PC-9 (cell line): ENCODE measurements at regions of chr19 and their contacts with region 1.

Region 1: GRCh38 chr19:12139885-12140547 is at the start of gene ZNF20:
- DNase-seq: peak; percentile 93 to 96
- H3K4me3 ChIP-seq: peak within 1 kb of the TSS; percentile 76
- H3K27ac ChIP-seq: no peak within 1 kb of the TSS
- H3K4me1 ChIP-seq: peaks cover 8% of the 10 kb centered on the region; the same call in 1 of the 2 replicates
- H3K27me3 ChIP-seq: no peaks in the 10 kb centered on the region
- CTCF ChIP-seq: no peak
- total RNA-seq, gene ZNF20: 2.9 and 8.6 TPM in 2 replicates

Region 2: GRCh38 chr19:11798391-11799330 is 341.4 kb before region 1 on chr19 and contains the start of gene ZNF491:
- CTCF ChIA-PET with region 1: interaction called, 8 read pairs
- POLR2A ChIA-PET with region 1: no interaction called
- intact Hi-C with region 1: loop called (anchors 1 kb)
- DNase-seq: peak in 1 of 2 experiments; percentile 69
- H3K4me3 ChIP-seq: peak within 1 kb of the TSS; percentile 19; the same call in 1 of the 2 replicates
- H3K27ac ChIP-seq: no peak within 1 kb of the TSS
- H3K4me1 ChIP-seq: no peaks in the 10 kb centered on the region
- H3K27me3 ChIP-seq: no peaks in the 10 kb centered on the region
- CTCF ChIP-seq: no peak
- total RNA-seq, gene ZNF491: not detected in 2 replicates

Region 3: GRCh38 chr19:11881151-11881800 is 258.7 kb before region 1 on chr19:
- CTCF ChIA-PET with region 1: no interaction called
- POLR2A ChIA-PET with region 1: no interaction called
- intact Hi-C with region 1: loop called (anchors 1 kb)
- DNase-seq: peak in 1 of 2 experiments; percentile 54
- H3K4me3 ChIP-seq: no peak overlapping the region
- H3K27ac ChIP-seq: no peak overlapping the region
- H3K4me1 ChIP-seq: no peaks in the 10 kb centered on the region
- H3K27me3 ChIP-seq: peaks cover 21% of the 10 kb centered on the region; the same call in 1 of the 2 replicates
- CTCF ChIP-seq: peak; percentile 80

Region 4: GRCh38 chr19:11987405-11988281 is 152.4 kb before region 1 on chr19:
- CTCF ChIA-PET with region 1: interaction called, 3 read pairs
- POLR2A ChIA-PET with region 1: no interaction called
- intact Hi-C with region 1: loop called (anchors 1 kb)
- DNase-seq: peak; percentile 82 to 92
- H3K4me3 ChIP-seq: peak overlapping the region; percentile 48
- H3K27ac ChIP-seq: no peak overlapping the region
- H3K4me1 ChIP-seq: peaks cover 7% of the 10 kb centered on the region; the same call in 1 of the 2 replicates
- H3K27me3 ChIP-seq: peaks cover 16% of the 10 kb centered on the region; the same call in 1 of the 2 replicates
- CTCF ChIP-seq: no peak

Region 5: GRCh38 chr19:12090807-12091206 is 49.2 kb before region 1 on chr19:
- CTCF ChIA-PET with region 1: interaction called, 3 read pairs
- POLR2A ChIA-PET with region 1: no interaction called
- intact Hi-C with region 1: loop called (anchors 2 kb)
- DNase-seq: peak in 1 of 2 experiments; percentile 23
- H3K4me3 ChIP-seq: no peak overlapping the region
- H3K27ac ChIP-seq: no peak overlapping the region
- H3K4me1 ChIP-seq: no peaks in the 10 kb centered on the region
- H3K27me3 ChIP-seq: no peaks in the 10 kb centered on the region
- CTCF ChIP-seq: peak; percentile 72